Heart left ventricle (tissue), 16 donors: ENCODE measurements at regions of chr7 and their contacts with region 1.

Region 1: DNA sequence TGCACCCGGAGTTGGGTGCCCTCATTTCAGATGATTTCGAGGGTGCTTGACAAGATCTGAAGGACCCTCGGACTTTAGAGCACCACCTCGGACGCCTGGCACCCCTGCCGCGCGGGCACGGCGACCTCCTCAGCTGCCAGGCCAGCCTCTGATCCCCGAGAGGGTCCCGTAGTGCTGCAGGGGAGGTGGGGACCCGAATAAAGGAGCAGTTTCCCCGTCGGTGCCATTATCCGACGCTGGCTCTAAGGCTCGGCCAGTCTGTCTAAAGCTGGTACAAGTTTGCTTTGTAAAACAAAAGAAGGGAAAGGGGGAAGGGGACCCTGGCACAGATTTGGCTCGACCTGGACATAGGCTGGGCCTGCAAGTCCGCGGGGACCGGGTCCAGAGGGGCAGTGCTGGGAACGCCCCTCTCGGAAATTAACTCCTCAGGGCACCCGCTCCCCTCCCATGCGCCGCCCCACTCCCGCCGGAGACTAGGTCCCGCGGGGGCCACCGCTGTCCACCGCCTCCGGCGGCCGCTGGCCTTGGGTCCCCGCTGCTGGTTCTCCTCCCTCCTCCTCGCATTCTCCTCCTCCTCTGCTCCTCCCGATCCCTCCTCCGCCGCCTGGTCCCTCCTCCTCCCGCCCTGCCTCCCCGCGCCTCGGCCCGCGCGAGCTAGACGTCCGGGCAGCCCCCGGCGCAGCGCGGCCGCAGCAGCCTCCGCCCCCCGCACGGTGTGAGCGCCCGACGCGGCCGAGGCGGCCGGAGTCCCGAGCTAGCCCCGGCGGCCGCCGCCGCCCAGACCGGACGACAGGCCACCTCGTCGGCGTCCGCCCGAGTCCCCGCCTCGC is at the start of gene EGFR:
- DNase-seq: peak; percentile 83 to 89 (median 85)
- ATAC-seq: peak; percentile 65 to 89 (median 84)
- H3K4me3 ChIP-seq: peak within 1 kb of the TSS; percentile 62 to 95 (median 84)
- H3K27ac ChIP-seq: peak within 1 kb of the TSS; percentile 61 to 97 (median 94)
- H3K4me1 ChIP-seq: peaks cover 0 to 22% (median 9%) of the 10 kb centered on the region in 12 donors
- H3K27me3 ChIP-seq: peaks cover 0 to 32% (median 14%) of the 10 kb centered on the region in 9 donors
- CTCF ChIP-seq: no peak
- POLR2A ChIP-seq: peak in 1 of 2 donors; percentile 79
- total RNA-seq, gene EGFR: 4.6 to 29.6 (median 8.7) TPM

Region 2: DNA sequence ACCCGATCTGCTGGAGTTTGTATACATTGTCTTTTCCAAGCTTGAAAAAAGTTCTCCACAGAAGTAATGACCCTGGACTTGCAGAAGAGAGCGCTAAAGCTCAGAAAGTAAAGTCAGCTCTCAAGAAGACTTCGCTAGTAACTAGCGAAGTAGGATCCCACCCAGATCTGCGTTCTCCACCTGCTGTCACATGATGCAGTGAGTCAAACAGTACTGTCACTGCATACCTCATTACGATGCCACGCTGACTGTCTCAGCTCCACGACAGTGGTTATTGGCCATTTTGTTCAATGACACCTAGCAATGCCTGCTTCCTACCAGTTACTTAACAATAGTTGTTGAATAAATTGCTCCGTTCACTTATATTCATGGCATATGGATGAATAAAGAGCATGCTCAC is 229.9 kb before region 1 on chr7:
- intact Hi-C with region 1: loop called in 2 of 10 experiments (anchors 10 kb)
- DNase-seq: no peak
- ATAC-seq: peak; percentile 55 to 82 (median 76)
- H3K4me3 ChIP-seq: no peak overlapping the region
- H3K27ac ChIP-seq: no peak overlapping the region
- H3K4me1 ChIP-seq: peaks cover 0 to 8% (median 2%) of the 10 kb centered on the region in 12 donors
- H3K27me3 ChIP-seq: no peaks in the 10 kb centered on the region
- CTCF ChIP-seq: peak; percentile 52 to 81 (median 71)
- POLR2A ChIP-seq: no peak

Region 3: DNA sequence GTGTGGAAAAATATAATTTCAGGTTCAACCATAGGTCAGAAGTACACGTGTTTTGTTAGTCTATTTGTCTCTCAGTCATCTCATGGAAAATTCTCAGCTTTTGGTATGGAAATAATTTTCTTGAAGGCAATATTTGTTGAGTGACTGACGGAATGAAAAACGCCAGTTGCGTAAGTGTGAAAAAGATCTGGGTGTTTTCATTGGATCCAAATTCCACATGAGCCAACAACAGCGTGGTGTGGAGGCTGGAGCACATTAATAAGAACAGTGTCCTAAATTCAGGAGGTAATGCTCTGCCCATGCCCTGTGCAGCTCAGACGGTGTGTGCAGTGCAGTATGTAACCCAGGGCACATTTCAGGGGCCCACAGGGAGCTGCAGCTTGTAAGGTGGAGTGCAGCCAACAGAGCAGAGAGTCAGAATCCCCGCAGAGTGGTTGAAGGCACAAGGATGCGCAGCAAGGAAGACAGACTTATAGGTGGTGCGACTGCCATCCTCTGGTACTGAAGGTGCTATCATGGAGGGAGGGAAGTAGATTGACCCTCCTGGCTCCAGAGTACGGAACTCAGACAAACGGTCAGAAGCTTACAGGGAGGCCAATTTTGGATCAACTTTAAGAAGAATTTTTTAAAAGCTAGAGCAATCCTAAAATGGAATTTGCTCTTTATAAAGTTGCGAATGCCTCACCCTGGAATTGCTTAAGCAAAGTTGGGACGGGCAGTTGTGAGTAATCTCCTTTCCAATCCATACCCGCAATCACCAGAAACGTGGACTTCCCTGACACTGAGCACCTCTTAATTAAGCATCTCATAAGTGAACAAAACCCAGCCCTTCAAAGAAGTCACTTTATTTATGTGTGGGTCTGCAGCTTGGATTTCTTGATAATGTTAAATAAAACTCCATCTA is 38.3 kb after region 1 on chr7:
- intact Hi-C with region 1: loop called in 1 of 10 experiments (anchors 5 kb)
- DNase-seq: no peak
- ATAC-seq: peak in 3 of 4 donors; percentile 43 to 72 (median 72)
- H3K4me3 ChIP-seq: no peak overlapping the region
- H3K27ac ChIP-seq: peak overlapping the region in 3 of 12 donors; percentile 10 to 31 (median 27)
- H3K4me1 ChIP-seq: peaks cover 0 to 65% (median 17%) of the 10 kb centered on the region in 12 donors
- H3K27me3 ChIP-seq: no peaks in the 10 kb centered on the region
- CTCF ChIP-seq: no peak
- POLR2A ChIP-seq: no peak

Region 4: GRCh38 chr7:55073945-55074499 is 55.4 kb after region 1 on chr7:
- intact Hi-C with region 1: loop called in 4 of 10 experiments (anchors 1 to 5 kb)
- DNase-seq: peak in 2 of 5 donors; percentile 38 to 76
- ATAC-seq: peak; percentile 59 to 87 (median 82)
- H3K4me3 ChIP-seq: peak overlapping the region in 9 of 12 donors; percentile 6 to 43 (median 26)
- H3K27ac ChIP-seq: peak overlapping the region; percentile 14 to 79 (median 72)
- H3K4me1 ChIP-seq: peaks cover 0 to 55% (median 21%) of the 10 kb centered on the region in 12 donors
- H3K27me3 ChIP-seq: no peaks in the 10 kb centered on the region
- CTCF ChIP-seq: no peak
- POLR2A ChIP-seq: no peak

Region 5: DNA sequence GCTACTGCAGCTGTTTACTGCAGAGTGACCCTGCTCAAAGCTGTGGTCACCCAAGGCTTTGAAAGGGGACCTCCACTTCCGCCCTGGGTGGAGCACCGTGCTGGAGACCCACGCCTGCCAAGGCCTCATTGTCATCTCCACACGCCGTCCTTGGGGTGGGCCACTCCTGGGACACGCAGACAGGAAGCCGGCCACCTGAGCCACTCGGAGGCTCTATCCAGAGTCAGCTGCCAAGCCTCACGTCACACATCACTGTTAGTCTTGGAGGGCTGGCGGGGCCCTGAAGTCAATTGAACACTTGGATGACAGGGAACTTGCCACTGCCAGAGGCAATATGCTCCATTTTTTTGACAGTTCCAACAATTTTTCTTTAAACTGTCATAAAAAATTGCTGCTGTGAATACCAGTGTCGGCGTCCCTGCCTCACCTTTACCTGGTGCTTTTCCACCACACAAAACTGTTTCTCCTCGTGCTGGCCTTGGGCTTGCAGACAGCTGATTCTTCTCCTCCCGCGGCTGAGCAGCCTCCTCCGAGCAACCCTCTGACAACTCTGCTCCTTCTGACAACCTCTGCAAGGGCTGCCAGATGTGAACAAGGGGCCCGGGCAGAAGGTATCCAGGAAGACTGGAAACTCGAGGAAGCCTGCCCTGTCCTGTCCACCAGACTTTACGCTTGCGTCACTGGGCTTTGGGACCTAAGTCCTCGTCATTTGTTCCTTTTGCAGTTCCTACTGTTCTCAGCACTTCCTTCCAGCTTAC is 82.1 kb after region 1 on chr7:
- intact Hi-C with region 1: loop called in 1 of 10 experiments (anchors 1 kb)
- DNase-seq: peak; percentile 88 to 97 (median 90)
- ATAC-seq: peak; percentile 80 to 92 (median 85)
- H3K4me3 ChIP-seq: peak overlapping the region in 2 of 12 donors; percentile 2 to 10
- H3K27ac ChIP-seq: peak overlapping the region in 11 of 12 donors; percentile 51 to 89 (median 68)
- H3K4me1 ChIP-seq: peaks cover 0 to 58% (median 22%) of the 10 kb centered on the region in 12 donors
- H3K27me3 ChIP-seq: no peaks in the 10 kb centered on the region
- CTCF ChIP-seq: no peak
- POLR2A ChIP-seq: no peak

Region 6: DNA sequence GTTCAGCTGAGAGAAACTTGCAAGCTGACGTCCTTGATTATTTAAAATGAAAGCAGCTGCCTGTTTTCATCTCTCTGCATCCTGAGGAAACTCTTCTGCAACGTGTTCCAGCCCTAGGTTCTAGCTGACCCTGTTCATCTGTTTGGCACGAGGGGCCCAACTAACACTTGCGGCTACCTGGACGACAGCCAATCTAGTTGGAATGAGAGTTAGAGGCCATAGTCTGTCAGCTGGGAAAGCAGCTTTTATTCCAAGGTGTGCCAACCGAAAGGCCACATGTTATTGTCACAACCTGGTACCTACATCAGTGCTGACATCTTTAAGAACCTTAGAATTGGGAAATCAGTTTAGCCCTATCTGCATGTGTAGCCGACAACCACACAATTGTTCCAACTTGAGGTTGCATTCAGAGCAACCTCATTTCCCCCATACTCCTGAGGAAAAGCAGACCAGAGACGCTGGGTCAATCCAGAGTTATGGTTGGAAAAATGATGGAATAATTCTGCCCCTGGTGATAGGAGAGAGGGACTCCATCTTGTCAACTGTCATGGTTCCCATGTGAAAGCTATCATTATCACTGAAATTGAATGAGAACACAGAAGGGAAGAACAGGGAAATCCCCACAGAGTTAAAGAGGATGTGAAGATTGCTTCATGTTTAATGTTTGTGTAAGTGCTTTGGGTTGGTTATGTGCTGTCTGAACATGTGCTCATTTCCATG is 121.8 kb after region 1 on chr7:
- intact Hi-C with region 1: loop called in 1 of 10 experiments (anchors 5 kb)
- DNase-seq: peak in 4 of 5 donors; percentile 48 to 77 (median 57)
- ATAC-seq: peak; percentile 70 to 88 (median 78)
- H3K4me3 ChIP-seq: no peak overlapping the region
- H3K27ac ChIP-seq: peak overlapping the region in 6 of 12 donors; percentile 8 to 56 (median 28)
- H3K4me1 ChIP-seq: peaks cover 0 to 16% (median 0%) of the 10 kb centered on the region in 12 donors
- H3K27me3 ChIP-seq: no peaks in the 10 kb centered on the region
- CTCF ChIP-seq: no peak
- POLR2A ChIP-seq: no peak

Region 7: GRCh38 chr7:55245271-55245723 is 226.7 kb after region 1 on chr7:
- intact Hi-C with region 1: loop called in 4 of 10 experiments (anchors 10 kb)
- DNase-seq: no peak
- ATAC-seq: no peak
- H3K4me3 ChIP-seq: no peak overlapping the region
- H3K27ac ChIP-seq: no peak overlapping the region
- H3K4me1 ChIP-seq: no peaks in the 10 kb centered on the region
- H3K27me3 ChIP-seq: peaks cover 0 to 6% (median 0%) of the 10 kb centered on the region in 9 donors
- CTCF ChIP-seq: no peak
- POLR2A ChIP-seq: no peak

Region 8: GRCh38 chr7:55533050-55533728 is 514.6 kb after region 1 on chr7:
- intact Hi-C with region 1: no loop called
- DNase-seq: no peak
- ATAC-seq: peak in 3 of 4 donors; percentile 55 to 56 (median 55)
- H3K4me3 ChIP-seq: peak overlapping the region in 1 of 12 donors; percentile 7
- H3K27ac ChIP-seq: peak overlapping the region in 3 of 12 donors; percentile 11 to 88 (median 28)
- H3K4me1 ChIP-seq: peaks cover 0 to 76% (median 38%) of the 10 kb centered on the region in 12 donors
- H3K27me3 ChIP-seq: no peaks in the 10 kb centered on the region
- CTCF ChIP-seq: no peak
- POLR2A ChIP-seq: no peak